Activated T-helper 2 cell treated with anti-CD3 and anti-CD28 coated beads, Interferon-gamma antibody, Interleukin-2, Interleukin-4, amounts not matched to agents 10 μg/mL and 5 μg/mL and 100 μg/mL, durations not matched to agents 14 hours and 24 hours and 36 hours (primary cell): ENCODE measurements at regions of chr2 and their contacts with region 1.

Region 1: DNA sequence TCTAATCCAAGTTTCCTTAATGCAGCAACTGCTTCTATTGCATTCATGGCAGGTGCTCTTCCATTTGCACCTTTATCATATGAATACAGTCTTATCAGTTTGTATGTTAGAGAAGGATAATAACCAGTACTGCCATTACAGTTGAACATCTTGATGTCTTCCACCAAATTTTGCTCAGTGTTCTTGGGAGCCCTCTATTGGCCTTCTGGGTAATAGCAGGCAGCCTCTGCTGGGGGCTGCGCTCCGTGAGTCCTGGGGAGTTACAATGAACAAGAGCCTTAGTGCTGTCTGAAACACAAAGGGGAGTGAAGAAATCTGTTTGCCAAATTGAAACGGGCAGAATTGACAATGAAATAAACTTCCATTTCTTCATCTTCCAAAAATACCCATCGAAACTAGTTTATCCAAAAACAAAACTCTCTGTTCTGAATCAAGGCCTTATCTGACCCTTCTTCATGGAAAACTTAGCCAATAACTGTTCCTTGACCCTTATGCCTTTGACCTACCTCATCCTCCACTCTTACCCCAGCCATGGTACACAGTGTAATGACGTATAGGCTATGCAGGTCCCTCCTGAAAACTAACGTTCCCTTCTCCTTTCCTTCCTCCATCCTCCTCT is 79.9 kb downstream of the ALK start:
- DNase-seq: no peak
- H3K4me3 Mint-ChIP-seq: no peak overlapping the region
- H3K27ac Mint-ChIP-seq: no peak overlapping the region
- H3K4me1 Mint-ChIP-seq: no peaks in the 10 kb centered on the region
- H3K27me3 Mint-ChIP-seq: no peaks in the 10 kb centered on the region

Region 2: DNA sequence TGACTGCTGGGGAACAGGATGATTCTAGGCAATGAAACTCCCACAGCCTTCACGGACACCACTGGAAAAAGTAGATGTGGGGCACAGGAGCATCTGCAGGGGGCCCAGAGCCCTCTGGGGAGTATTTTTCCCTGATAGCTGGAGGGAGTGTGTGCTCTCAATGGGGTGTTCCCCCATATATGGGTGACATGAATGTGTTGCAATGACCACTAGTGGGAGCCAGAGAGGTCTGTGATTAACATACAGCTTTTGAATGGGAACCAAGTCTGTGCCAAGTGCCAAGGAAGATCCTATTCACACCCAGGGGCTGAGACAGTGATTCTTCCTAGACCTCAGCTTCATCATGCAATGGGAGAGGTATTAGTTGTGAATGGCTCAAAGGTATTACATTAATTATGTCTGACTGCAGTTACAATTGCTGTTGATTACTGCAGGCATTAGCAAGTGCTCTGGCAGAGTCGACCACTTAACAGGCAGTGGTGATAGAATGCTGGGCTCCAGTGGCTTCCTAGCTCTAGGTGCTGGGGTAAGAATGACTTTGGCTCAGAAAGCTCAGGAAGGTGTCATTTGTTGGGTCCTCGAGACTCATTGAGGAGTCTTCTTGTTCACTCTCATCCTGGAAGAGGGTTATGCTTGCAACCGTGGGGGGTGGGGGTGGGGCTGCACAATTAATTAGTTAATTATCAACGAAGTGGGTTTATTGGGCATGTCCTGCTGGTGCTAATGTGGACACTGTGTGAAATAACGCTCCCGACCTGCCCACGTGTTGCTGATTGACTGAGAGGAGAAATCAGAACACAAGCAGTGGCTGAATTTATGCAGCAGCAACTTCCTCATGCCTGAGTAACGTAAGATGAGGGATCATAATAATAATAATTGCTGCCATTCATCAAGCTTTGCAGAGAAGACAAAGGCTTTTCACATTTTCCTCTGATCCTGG is 532.1 kb before region 1 on chr2:
- intact Hi-C with region 1: loop called (anchors 10 kb)
- DNase-seq: peak; percentile 31
- H3K4me3 Mint-ChIP-seq: no peak overlapping the region
- H3K27ac Mint-ChIP-seq: no peak overlapping the region
- H3K4me1 Mint-ChIP-seq: peaks cover 19% of the 10 kb centered on the region
- H3K27me3 Mint-ChIP-seq: peaks cover 36% of the 10 kb centered on the region

Region 3: GRCh38 chr2:30366199-30366691 is 524.8 kb after region 1 on chr2:
- intact Hi-C with region 1: no loop called
- DNase-seq: no peak
- H3K4me3 Mint-ChIP-seq: no peak overlapping the region
- H3K27ac Mint-ChIP-seq: peak overlapping the region; percentile 69
- H3K4me1 Mint-ChIP-seq: peaks cover 22% of the 10 kb centered on the region
- H3K27me3 Mint-ChIP-seq: no peaks in the 10 kb centered on the region